ENCODE measurements at regions of chr1 and their contacts with region 1.

Region 1: DNA sequence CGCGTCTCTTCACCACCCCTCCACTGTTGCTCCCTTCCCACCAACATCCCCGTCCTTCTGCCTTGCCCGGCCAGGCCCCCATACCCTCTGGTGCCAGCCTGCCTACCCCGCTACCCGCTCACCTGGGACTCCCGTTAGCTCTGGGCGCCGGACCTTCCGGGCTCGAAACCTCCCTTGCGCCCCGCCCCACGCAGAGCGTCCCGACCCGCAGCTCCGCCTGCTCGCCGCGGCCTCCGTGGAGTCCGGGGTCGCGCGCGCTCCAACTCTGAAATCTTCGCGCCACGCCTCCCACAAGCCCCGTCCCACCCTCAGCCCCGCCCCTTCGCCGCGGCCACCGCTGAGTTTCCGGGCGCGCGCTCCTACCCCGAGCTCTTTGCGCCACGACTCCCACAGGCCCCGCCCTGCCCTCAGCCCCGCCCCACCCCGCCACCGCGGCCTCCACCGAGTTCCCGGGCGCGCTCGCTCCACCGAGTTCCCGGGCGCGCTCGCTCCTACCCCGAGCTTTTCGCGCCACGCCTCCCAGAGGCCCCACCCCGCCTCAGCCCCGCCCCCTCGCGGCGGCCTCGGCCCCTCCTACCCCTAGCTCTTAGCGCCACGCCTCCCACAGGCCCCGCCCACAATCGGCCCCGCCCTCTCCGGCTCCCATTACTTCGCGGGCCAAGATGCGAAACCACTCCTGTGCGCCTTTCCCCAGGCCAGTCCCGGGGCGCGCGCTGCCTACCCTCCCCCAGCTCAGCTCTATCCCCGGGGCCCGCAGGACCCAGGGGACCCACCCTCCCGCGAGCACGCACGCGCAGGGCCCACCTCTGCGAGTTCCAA is at the start of gene IFT25:
- DNase-seq: peak; percentile 97
- H3K4me3 ChIP-seq: peak within 1 kb of the TSS; percentile 72 to 95
- H3K27ac ChIP-seq: peak within 1 kb of the TSS; percentile 79 to 92
- H3K4me1 ChIP-seq: peaks cover 11 to 31% of the 10 kb centered on the region in 2 experiments; a peak in 2 of 4 replicates
- H3K27me3 ChIP-seq: no peaks in the 10 kb centered on the region
- CTCF ChIP-seq: no peak
- EP300 ChIP-seq: no peak
- RAD21 ChIP-seq: no peak
- polyA plus RNA-seq, gene IFT25: 25.7 TPM in 2 replicates

Region 2: DNA sequence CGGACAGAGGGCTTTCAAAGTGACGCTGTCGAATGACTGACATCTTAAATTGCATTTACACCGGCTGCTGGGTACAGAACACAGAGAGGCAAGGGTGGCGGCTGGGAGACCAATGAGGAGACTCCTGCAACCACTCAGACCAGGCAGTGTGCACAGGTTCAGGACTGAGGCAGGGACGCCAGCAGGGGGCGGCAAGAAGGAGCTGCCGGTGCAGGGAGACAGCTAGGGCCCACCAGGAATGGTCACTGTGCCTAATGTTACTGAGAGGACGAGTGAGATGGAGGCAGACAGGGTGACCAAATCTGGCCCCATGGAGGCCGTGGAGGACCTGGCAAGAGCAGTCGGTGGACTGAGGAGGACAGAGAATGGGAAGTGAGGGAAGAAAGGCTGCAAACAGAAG is 230.2 kb before region 1 on chr1:
- CTCF ChIA-PET with region 1: no interaction called
- POLR2A ChIA-PET with region 1: no interaction called
- DNase-seq: peak; percentile 64
- H3K4me3 ChIP-seq: no peak overlapping the region
- H3K27ac ChIP-seq: no peak overlapping the region
- H3K4me1 ChIP-seq: no peaks in the 10 kb centered on the region; a peak in 1 of 4 replicates
- H3K27me3 ChIP-seq: no peaks in the 10 kb centered on the region
- CTCF ChIP-seq: peak; percentile 61
- EP300 ChIP-seq: no peak
- RAD21 ChIP-seq: peak; percentile 51

Region 3: DNA sequence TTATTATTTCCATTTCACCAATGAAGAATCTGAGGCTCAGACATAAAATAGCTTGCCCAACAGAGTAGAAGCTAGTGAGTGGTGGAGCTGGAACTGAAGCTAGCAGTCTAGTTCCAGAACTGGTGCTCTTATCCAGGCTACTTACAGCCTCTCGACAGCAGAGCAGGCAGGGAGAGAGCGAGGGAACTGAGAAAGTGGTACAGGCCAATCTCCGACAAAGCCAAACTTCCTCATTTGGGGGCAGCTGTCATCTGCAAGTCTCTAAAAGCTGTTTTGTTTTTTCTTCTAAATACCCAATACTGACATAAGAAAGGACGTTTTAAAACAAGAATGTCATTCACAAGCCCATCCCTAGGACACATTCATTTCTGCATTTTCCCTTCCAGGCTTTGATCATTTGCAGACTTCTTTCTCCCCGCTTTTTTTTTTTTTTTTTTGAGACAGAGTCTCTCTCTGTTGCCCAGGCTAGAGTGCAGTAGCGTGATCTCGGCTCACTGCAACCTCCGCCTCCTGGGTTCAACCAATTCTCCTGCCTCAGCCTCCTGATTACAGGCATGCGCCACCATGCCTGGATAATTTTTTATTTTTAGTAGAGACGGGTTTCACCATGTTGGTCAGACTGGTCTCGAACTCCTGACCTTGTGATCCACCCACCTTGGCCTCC is 76.1 kb before region 1 on chr1:
- CTCF ChIA-PET with region 1: interaction called, 18 read pairs
- POLR2A ChIA-PET with region 1: no interaction called
- DNase-seq: no peak
- H3K4me3 ChIP-seq: no peak overlapping the region
- H3K27ac ChIP-seq: no peak overlapping the region
- H3K4me1 ChIP-seq: no peaks in the 10 kb centered on the region
- H3K27me3 ChIP-seq: no peaks in the 10 kb centered on the region
- CTCF ChIP-seq: no peak
- EP300 ChIP-seq: no peak
- RAD21 ChIP-seq: no peak

Region 4: GRCh38 chr1:53889304-53890298 is 56.0 kb before region 1 on chr1 and contains the start of gene YIPF1:
- CTCF ChIA-PET with region 1: interaction called, 10 read pairs
- POLR2A ChIA-PET with region 1: interaction called, 4 read pairs
- DNase-seq: peak; percentile 94
- H3K4me3 ChIP-seq: peak within 1 kb of the TSS; percentile 80 to 100
- H3K27ac ChIP-seq: peak within 1 kb of the TSS; percentile 54 to 75
- H3K4me1 ChIP-seq: peaks cover 0 to 7% of the 10 kb centered on the region in 2 experiments; a peak in 2 of 4 replicates
- H3K27me3 ChIP-seq: no peaks in the 10 kb centered on the region
- CTCF ChIP-seq: no peak
- EP300 ChIP-seq: no peak
- RAD21 ChIP-seq: no peak
- polyA plus RNA-seq, gene YIPF1: 23.1 and 31.7 TPM in 2 replicates

Measured in SK-N-SH (cell line).